ENCODE measurements at regions of chr3 and their contacts with region 1.

Region 1: DNA sequence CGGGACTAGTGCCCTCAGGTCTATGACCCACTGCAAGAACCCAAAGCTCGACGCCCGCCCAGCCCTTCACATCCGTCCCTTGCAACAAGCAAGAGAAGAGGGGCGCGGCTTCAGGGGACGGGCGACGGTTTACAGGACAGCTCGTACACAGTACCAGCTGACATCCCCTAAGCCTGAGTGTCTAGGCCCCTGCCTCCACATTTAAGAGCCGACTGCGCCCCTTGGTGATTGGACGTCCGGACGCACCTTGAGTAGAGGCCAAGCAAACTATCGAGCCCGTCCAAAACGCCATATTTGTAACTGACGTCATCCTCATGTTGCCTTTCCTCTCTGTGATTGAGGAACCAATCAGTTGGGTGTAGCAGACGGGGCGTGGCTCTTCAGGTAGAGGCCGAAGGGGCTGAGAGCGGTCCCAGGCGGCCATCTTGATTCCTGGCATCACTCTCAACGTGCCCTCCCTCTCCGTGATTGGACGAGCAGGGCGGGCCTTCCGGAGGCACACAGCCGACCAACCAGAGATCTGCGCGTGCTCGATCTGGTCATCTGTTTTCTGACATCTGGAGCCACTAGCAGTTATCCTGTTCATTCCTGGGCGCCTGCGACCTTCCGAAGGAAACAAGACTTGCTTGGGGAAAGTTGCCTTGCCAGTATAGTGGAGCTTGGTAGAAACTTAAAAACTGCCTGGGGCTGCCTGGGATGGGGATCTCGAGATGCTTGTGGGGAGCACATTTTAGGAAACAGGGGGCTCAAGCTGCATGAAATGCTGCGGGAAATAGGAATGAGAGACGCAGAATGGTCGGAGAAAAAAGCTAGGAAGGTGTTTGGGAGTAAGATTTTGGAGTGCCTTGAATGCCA is 4.0 kb upstream of the RPL14 start:
- DNase-seq: peak; percentile 99
- H3K4me3 ChIP-seq: peak overlapping the region; percentile 55 to 73
- H3K27ac ChIP-seq: peak overlapping the region; percentile 92 to 93
- H3K4me1 ChIP-seq: no peaks in the 10 kb centered on the region
- H3K27me3 ChIP-seq: no peaks in the 10 kb centered on the region
- CTCF ChIP-seq: peak in 2 of 4 experiments; percentile 9 to 23
- POLR2A ChIP-seq: peak; percentile 60

Region 2: DNA sequence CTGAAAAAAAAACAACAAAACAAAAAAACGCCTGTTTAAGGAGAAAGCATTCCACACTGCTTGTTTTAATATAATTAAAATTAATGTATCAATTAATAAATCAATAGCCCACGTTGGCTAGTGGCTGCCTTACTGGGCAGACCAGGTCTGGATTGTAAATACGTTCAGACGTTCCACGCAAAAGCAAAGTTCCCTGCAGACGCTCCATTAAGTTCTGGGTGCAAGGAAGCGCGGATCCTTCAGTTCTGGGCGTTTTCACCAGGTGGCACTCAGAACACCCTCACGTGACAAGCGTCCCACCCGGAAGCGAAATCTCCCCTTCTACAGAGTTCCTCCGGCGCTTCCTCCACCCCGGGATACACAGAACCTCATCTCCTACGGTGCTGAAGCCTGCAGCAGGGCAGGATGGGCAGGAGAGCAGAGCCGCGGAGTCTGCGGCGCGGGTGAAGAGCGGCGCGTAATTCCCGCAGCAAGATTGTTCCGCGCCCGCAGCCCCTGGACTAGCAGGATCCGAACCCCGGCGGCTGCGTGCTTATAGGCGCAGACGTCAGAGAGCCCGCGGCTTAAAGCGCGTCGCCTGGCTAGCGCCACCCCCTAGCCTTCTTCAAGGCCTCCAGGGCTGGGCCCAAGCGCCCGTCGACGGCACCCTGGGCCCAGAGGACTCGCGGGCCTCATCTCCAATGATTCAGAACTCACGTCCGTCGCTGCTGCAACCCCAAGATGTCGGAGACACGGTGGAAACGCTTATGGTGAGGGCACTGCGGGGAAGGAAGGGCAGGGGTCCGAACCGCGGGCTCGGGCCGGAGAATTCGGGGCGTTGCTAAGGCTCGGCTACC is 1069.8 kb before region 1 on chr3 and contains the start of gene SLC25A38:
- intact Hi-C with region 1: loop called (anchors 10 kb)
- DNase-seq: peak; percentile 75
- H3K4me3 ChIP-seq: peak within 1 kb of the TSS; percentile 58 to 69
- H3K27ac ChIP-seq: peak within 1 kb of the TSS; percentile 91 to 95
- H3K4me1 ChIP-seq: no peaks in the 10 kb centered on the region
- H3K27me3 ChIP-seq: no peaks in the 10 kb centered on the region
- CTCF ChIP-seq: peak in 2 of 4 experiments; percentile 37 to 51
- POLR2A ChIP-seq: peak; percentile 49
- total RNA-seq, gene SLC25A38: 36.7 to 72.4 TPM

Region 3: DNA sequence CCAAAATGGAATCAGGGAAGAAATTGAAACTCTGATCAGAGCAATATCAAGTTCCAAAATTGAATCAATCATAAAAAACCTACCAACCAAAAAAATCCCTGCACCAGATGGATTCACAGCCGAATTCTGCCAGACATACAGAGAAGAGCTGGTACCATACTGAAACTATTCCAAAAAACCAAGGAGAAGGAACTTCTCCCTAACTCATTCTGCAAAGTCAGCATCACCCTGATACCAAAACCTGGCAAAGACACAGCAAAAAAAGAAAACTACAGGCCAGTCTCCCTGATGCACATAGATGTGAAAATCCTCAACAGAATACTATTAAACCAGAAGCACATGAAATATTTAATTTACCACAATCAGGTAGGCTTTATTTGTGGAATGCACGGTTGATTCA is 525.6 kb before region 1 on chr3:
- intact Hi-C with region 1: no loop called
- DNase-seq: no peak
- H3K4me3 ChIP-seq: no peak overlapping the region
- H3K27ac ChIP-seq: no peak overlapping the region
- H3K4me1 ChIP-seq: no peaks in the 10 kb centered on the region
- H3K27me3 ChIP-seq: no peaks in the 10 kb centered on the region
- CTCF ChIP-seq: no peak
- POLR2A ChIP-seq: no peak

Region 4: DNA sequence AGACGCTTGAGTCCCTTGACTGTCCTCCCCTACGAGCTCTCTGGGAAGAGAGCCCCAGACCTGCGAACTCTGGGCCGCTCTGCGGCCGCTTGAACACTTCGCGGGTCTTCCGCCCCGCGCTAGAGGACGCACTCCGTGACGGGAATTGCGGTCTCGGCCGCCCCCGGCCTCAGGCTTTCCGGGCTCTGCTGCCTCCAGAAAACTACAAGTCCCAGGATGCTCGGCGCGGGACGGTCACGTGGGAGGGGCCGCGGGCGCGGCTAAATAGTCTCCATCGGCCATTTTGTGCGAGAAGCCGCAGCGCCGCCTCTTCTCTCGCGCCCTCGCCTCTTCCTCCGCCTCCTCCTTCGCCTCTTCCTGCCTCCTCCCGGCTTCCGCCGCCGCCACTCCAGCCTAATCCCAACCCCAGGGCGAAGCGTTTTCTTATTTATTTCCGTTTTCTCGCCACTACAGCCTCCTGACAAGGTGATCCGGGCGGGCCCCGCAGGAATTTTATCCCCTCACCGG is 143.6 kb before region 1 on chr3 and contains the start of gene EIF1B:
- intact Hi-C with region 1: loop called (anchors 1 kb)
- DNase-seq: peak; percentile 98
- H3K4me3 ChIP-seq: peak within 1 kb of the TSS; percentile 75 to 76
- H3K27ac ChIP-seq: peak within 1 kb of the TSS; percentile 82 to 85
- H3K4me1 ChIP-seq: peaks cover 6% of the 10 kb centered on the region
- H3K27me3 ChIP-seq: no peaks in the 10 kb centered on the region
- CTCF ChIP-seq: peak; percentile 81 to 98 (median 98)
- POLR2A ChIP-seq: peak; percentile 96
- total RNA-seq, gene EIF1B: 26.5 to 29.4 TPM

Region 5: GRCh38 chr3:40524568-40525285 is 71.6 kb after region 1 on chr3 and contains the start of gene ZNF621:
- intact Hi-C with region 1: loop called (anchors 5 kb)
- DNase-seq: peak; percentile 86
- H3K4me3 ChIP-seq: peak within 1 kb of the TSS; percentile 63 to 82
- H3K27ac ChIP-seq: peak within 1 kb of the TSS; percentile 81 to 88
- H3K4me1 ChIP-seq: no peaks in the 10 kb centered on the region
- H3K27me3 ChIP-seq: no peaks in the 10 kb centered on the region
- CTCF ChIP-seq: no peak
- POLR2A ChIP-seq: peak; percentile 64
- total RNA-seq, gene ZNF621: 15.8 to 23.6 TPM

Region 6: GRCh38 chr3:40971191-40972168 is 518.4 kb after region 1 on chr3:
- intact Hi-C with region 1: loop called (anchors 10 kb)
- DNase-seq: peak; percentile 30
- H3K4me3 ChIP-seq: no peak overlapping the region
- H3K27ac ChIP-seq: peak overlapping the region in 1 of 2 donors; percentile 39
- H3K4me1 ChIP-seq: no peaks in the 10 kb centered on the region
- H3K27me3 ChIP-seq: no peaks in the 10 kb centered on the region
- CTCF ChIP-seq: no peak
- POLR2A ChIP-seq: no peak

Region 7: DNA sequence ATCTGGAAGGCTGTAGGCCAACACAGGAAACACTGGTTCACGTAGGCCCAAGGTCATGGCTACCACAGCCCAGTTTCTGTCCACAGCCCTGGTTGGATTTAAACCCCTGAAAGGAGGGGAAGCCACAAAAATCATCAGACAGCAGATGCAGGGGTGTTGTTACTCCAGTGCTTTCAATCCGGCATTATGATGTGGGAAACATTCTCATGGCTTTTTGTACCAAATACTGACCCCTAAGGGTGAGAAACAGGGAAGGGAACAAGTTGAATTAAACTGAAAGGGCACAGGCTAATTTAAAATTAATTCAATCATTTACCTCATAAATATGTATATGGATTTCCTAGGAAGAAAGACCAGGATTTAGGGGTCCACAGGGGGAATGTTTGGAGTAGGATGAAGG is 1121.8 kb after region 1 on chr3:
- intact Hi-C with region 1: no loop called
- DNase-seq: no peak
- H3K4me3 ChIP-seq: no peak overlapping the region
- H3K27ac ChIP-seq: no peak overlapping the region
- H3K4me1 ChIP-seq: no peaks in the 10 kb centered on the region
- H3K27me3 ChIP-seq: no peaks in the 10 kb centered on the region
- CTCF ChIP-seq: no peak
- POLR2A ChIP-seq: no peak

Measured in prostate gland (tissue), 2 donors.